A549 (cell line): ENCODE measurements at regions of chr17 and their contacts with region 1.

Region 1: GRCh38 chr17:57597531-57598453 is 147.3 kb downstream of the CCDC182 start:
- DNase-seq: peak; percentile 82 to 86
- ATAC-seq: peak; percentile 85 to 93
- H3K4me3 ChIP-seq: no peak overlapping the region
- H3K27ac ChIP-seq: peak overlapping the region; percentile 46 to 54; a peak in 5 of 6 replicates
- H3K4me1 ChIP-seq: peaks cover 15% of the 10 kb centered on the region
- CTCF ChIP-seq: peak; percentile 97
- EP300 ChIP-seq: no peak
- POLR2A ChIP-seq: no peak
- RAD21 ChIP-seq: peak; percentile 86 to 87

Region 2: GRCh38 chr17:57130761-57131461 is 466.9 kb before region 1 on chr17:
- CTCF ChIA-PET with region 1: interaction called, 13 read pairs
- POLR2A ChIA-PET with region 1: no interaction called
- DNase-seq: peak; percentile 82 to 99
- ATAC-seq: peak; percentile 95 to 96
- H3K4me3 ChIP-seq: peak overlapping the region; percentile 38
- H3K27ac ChIP-seq: peak overlapping the region; percentile 66 to 84
- H3K4me1 ChIP-seq: no peaks in the 10 kb centered on the region
- CTCF ChIP-seq: peak; percentile 99
- EP300 ChIP-seq: no peak
- POLR2A ChIP-seq: no peak
- RAD21 ChIP-seq: peak; percentile 92 to 100

Region 3: GRCh38 chr17:57498443-57498842 is 99.3 kb before region 1 on chr17:
- CTCF ChIA-PET with region 1: no interaction called
- POLR2A ChIA-PET with region 1: no interaction called
- DNase-seq: no peak
- ATAC-seq: no peak
- H3K4me3 ChIP-seq: no peak overlapping the region
- H3K27ac ChIP-seq: no peak overlapping the region
- H3K4me1 ChIP-seq: peaks cover 12% of the 10 kb centered on the region
- CTCF ChIP-seq: no peak
- EP300 ChIP-seq: no peak
- POLR2A ChIP-seq: no peak
- RAD21 ChIP-seq: no peak

Region 4: GRCh38 chr17:57577751-57578607 is 19.8 kb before region 1 on chr17:
- CTCF ChIA-PET with region 1: interaction called, 62 read pairs
- POLR2A ChIA-PET with region 1: interaction called, 8 read pairs
- DNase-seq: no peak
- ATAC-seq: no peak
- H3K4me3 ChIP-seq: no peak overlapping the region
- H3K27ac ChIP-seq: peak overlapping the region in 1 of 2 experiments; percentile 1; a peak in 1 of 6 replicates
- H3K4me1 ChIP-seq: peaks cover 13% of the 10 kb centered on the region; the same call in 2 of the 3 replicates
- CTCF ChIP-seq: no peak
- EP300 ChIP-seq: no peak
- POLR2A ChIP-seq: no peak
- RAD21 ChIP-seq: no peak

Region 5: DNA sequence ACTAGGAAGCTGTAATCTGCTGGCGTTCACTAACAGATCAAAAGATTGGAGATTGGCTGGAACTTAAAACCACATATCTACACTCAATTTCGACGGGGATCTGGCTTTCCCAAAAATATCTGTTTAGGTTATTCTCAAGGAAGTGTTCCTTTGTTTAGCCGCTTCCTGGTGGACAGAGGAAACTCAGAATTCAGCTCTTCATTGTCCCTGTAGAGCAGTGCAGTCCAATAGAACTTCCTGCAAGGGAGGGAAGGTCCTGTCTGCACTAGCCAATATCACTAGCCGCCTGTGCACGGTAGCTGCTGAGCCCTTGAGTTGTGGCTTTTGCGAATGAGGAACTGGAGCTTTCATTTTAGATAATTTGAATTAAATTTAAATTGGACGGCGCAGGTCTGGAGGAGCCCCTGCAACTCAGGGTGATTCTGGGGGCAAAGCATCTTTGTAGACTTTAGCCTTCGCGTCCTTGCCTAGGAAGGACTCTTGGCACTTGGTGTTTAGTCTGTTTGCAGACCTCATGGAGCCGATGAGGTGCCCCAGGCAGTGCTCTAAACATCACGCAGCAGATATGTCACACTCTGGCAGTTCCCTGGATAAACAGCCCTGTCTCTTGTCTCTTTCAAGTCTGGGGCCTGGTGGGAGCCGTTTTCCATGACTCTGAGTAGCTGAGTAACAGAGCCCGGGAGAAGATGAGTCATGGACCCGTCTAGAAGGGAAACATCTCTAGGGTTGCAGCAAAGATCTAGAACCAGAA is 25.1 kb after region 1 on chr17:
- CTCF ChIA-PET with region 1: interaction called, 63 read pairs
- POLR2A ChIA-PET with region 1: no interaction called
- DNase-seq: peak; percentile 42 to 45
- ATAC-seq: peak; percentile 60 to 77
- H3K4me3 ChIP-seq: no peak overlapping the region
- H3K27ac ChIP-seq: peak overlapping the region; percentile 10 to 37; a peak in 4 of 6 replicates
- H3K4me1 ChIP-seq: peaks cover 17% of the 10 kb centered on the region
- CTCF ChIP-seq: no peak
- EP300 ChIP-seq: no peak
- POLR2A ChIP-seq: no peak
- RAD21 ChIP-seq: no peak

Region 6: GRCh38 chr17:57649731-57650484 is 52.1 kb after region 1 on chr17:
- CTCF ChIA-PET with region 1: interaction called, 10 read pairs
- POLR2A ChIA-PET with region 1: no interaction called
- DNase-seq: peak; percentile 50 to 72
- ATAC-seq: peak; percentile 76 to 77; a peak in 5 of 6 replicates
- H3K4me3 ChIP-seq: no peak overlapping the region
- H3K27ac ChIP-seq: peak overlapping the region; percentile 59 to 84
- H3K4me1 ChIP-seq: peaks cover 34% of the 10 kb centered on the region
- CTCF ChIP-seq: no peak
- EP300 ChIP-seq: no peak
- POLR2A ChIP-seq: no peak
- RAD21 ChIP-seq: no peak

Region 7: GRCh38 chr17:57747221-57748017 is 149.6 kb after region 1 on chr17:
- CTCF ChIA-PET with region 1: interaction called, 11 read pairs
- POLR2A ChIA-PET with region 1: no interaction called
- DNase-seq: peak; percentile 79 to 84
- ATAC-seq: peak; percentile 80 to 91
- H3K4me3 ChIP-seq: no peak overlapping the region
- H3K27ac ChIP-seq: no peak overlapping the region
- H3K4me1 ChIP-seq: no peaks in the 10 kb centered on the region
- CTCF ChIP-seq: peak; percentile 96
- EP300 ChIP-seq: no peak
- POLR2A ChIP-seq: no peak
- RAD21 ChIP-seq: peak; percentile 93 to 98